ENCODE measurements at regions of chr4 and their contacts with region 1.

Region 1: GRCh38 chr4:38769857-38770256 is 12.9 kb downstream of the TLR10 start:
- DNase-seq: no peak
- ATAC-seq: no peak
- H3K4me3 ChIP-seq: no peak overlapping the region
- H3K27ac ChIP-seq: no peak overlapping the region
- H3K4me1 ChIP-seq: no peaks in the 10 kb centered on the region
- H3K27me3 ChIP-seq: no peaks in the 10 kb centered on the region
- CTCF ChIP-seq: no peak

Region 2: DNA sequence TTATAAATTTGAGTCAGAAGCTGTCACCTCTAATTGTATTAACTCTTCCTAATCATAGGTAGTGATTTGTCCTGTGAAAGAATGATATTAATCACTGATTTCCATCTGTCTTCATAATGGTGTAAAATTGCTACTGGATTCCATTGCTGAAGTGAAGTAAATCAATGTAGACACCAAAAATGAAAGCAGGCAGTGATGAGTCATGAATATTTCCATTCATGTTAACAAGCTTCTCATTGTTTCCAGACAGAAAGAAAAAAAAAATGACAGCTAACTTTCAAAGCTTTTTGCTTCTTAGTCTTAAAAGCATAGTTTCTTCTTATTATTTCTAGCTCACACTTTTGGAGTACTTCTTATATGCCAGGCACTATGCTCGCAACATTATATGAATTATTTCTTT is 119.3 kb after region 1 on chr4:
- CTCF ChIA-PET with region 1: no interaction called
- POLR2A ChIA-PET with region 1: no interaction called
- in situ Hi-C with region 1: no loop called
- intact Hi-C with region 1: no loop called
- DNase-seq: no peak
- ATAC-seq: no peak
- H3K4me3 ChIP-seq: no peak overlapping the region
- H3K27ac ChIP-seq: 0 out of 2 replicates have a peak overlapping the region, but pooled peaks have one; percentile 29
- H3K4me1 ChIP-seq: peaks cover 2% of the 10 kb centered on the region
- H3K27me3 ChIP-seq: no peaks in the 10 kb centered on the region
- CTCF ChIP-seq: no peak

Region 3: GRCh38 chr4:39154009-39154408 is 384.2 kb after region 1 on chr4:
- CTCF ChIA-PET with region 1: no interaction called
- POLR2A ChIA-PET with region 1: no interaction called
- in situ Hi-C with region 1: no loop called
- intact Hi-C with region 1: loop called (anchors 10 kb)
- DNase-seq: no peak
- ATAC-seq: no peak
- H3K4me3 ChIP-seq: no peak overlapping the region
- H3K27ac ChIP-seq: no peak overlapping the region
- H3K4me1 ChIP-seq: no peaks in the 10 kb centered on the region
- H3K27me3 ChIP-seq: no peaks in the 10 kb centered on the region
- CTCF ChIP-seq: no peak

Measured in Panc1 (cell line).